ENCODE measurements at regions of chr10 and their contacts with region 1.

Region 1: DNA sequence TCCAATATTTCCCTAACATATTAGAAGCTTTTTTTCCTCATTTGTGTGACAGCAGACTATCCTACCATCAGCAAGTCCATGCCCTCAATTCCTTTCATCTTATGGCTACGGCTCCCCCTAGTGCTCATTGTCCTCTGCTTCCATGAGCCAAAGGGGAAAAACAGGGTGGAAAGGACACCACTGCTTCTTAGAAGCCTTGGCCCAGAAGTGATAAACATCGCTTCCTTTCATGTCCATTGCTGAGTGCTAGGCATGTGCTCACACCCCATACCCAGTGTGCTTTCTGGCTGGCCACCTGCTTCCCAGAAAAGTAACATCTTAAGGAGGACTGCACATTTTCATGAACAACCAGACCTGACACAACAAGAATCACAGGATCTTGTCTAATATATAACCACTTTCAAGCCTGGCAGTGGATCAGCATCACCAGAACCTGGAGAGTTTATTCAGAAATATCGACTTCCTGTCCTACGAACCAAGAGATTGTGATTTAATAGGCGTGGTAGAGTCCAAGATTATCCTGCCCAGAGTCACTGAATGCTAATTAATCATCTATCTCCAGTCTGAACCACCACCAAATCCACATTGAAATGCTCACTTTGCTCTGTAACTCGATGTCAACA is 650.5 kb upstream of the SORCS1 start:
- ATAC-seq: peak; percentile 61 to 99 (median 76)
- H3K4me3 ChIP-seq: no peak overlapping the region
- H3K27ac ChIP-seq: no peak overlapping the region
- H3K4me1 ChIP-seq: peaks cover 0 to 12% of the 10 kb centered on the region in 2 donors

Region 2: GRCh38 chr10:107133656-107134055 is 681.3 kb before region 1 on chr10:
- in situ Hi-C with region 1: no loop called
- ATAC-seq: no peak
- H3K4me3 ChIP-seq: no peak overlapping the region
- H3K27ac ChIP-seq: no peak overlapping the region
- H3K4me1 ChIP-seq: peaks cover 10 to 15% of the 10 kb centered on the region in 2 donors

Region 3: GRCh38 chr10:107409522-107409921 is 405.5 kb before region 1 on chr10:
- in situ Hi-C with region 1: loop called in 1 of 9 experiments (anchors 25 kb)
- ATAC-seq: peak in 3 of 8 experiments; percentile 24 to 65 (median 36)
- H3K4me3 ChIP-seq: no peak overlapping the region
- H3K27ac ChIP-seq: no peak overlapping the region
- H3K4me1 ChIP-seq: peaks cover 0 to 13% of the 10 kb centered on the region in 2 donors